ENCODE measurements at regions of chr10 and their contacts with region 1.

Region 1: GRCh38 chr10:110376021-110376766 is 71.5 kb upstream of the SMNDC1 start:
- DNase-seq: peak; percentile 55
- H3K4me3 ChIP-seq: no peak overlapping the region
- H3K27ac ChIP-seq: peak overlapping the region; percentile 31
- H3K4me1 ChIP-seq: peaks cover 36% of the 10 kb centered on the region
- H3K27me3 ChIP-seq: no peaks in the 10 kb centered on the region
- CTCF ChIP-seq: no peak
- POLR2A ChIP-seq: no peak

Region 2: GRCh38 chr10:110387983-110388687 is 11.9 kb after region 1 on chr10:
- CTCF ChIA-PET with region 1: no interaction called
- POLR2A ChIA-PET with region 1: no interaction called
- dilution Hi-C with region 1: no loop called
- intact Hi-C with region 1: loop called (anchors 1 kb)
- DNase-seq: peak; percentile 90
- H3K4me3 ChIP-seq: no peak overlapping the region
- H3K27ac ChIP-seq: peak overlapping the region; percentile 69
- H3K4me1 ChIP-seq: peaks cover 33% of the 10 kb centered on the region
- H3K27me3 ChIP-seq: no peaks in the 10 kb centered on the region
- CTCF ChIP-seq: no peak
- POLR2A ChIP-seq: no peak

Region 3: DNA sequence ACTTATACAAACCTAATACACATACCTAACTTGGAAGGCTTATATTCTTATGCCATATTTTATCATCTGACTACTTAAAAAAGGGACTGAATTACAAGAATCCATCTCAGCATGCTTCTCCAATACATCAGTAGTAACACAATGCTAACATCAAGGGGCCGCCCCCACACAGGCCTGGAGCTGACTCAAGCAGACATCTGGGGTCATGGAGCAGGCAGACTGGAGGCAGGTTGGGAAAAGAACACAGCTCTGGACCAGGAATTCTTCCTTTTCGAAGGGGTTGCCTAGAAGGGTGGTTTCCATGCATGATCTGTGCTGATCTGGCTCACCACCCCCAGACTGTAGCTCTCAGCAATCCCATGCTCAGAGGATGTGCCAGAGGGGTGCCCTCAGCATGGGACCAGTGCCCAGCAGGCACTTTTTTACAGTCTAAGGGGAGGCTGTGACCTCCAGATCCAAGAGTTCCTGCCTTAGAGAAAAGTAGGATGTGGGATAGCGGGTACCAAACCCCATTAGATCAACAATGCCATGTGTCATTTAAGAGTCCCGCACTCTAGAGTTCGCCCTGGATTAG is 95.5 kb after region 1 on chr10:
- CTCF ChIA-PET with region 1: no interaction called
- POLR2A ChIA-PET with region 1: no interaction called
- dilution Hi-C with region 1: no loop called
- intact Hi-C with region 1: no loop called
- DNase-seq: no peak
- H3K4me3 ChIP-seq: no peak overlapping the region
- H3K27ac ChIP-seq: no peak overlapping the region
- H3K4me1 ChIP-seq: no peaks in the 10 kb centered on the region
- H3K27me3 ChIP-seq: no peaks in the 10 kb centered on the region
- CTCF ChIP-seq: no peak
- POLR2A ChIP-seq: no peak

Measured in endothelial cell of umbilical vein (primary cell).